HEK293 (cell line): ENCODE measurements at regions of chr22 and their contacts with region 1.

Region 1: GRCh38 chr22:38705235-38706100 is at the start of gene GTPBP1:
- H3K4me3 ChIP-seq: peak within 1 kb of the TSS; percentile 92
- H3K27ac ChIP-seq: peak within 1 kb of the TSS; percentile 94
- H3K4me1 ChIP-seq: peaks cover 13% of the 10 kb centered on the region
- CTCF ChIP-seq: peak; percentile 78

Region 2: DNA sequence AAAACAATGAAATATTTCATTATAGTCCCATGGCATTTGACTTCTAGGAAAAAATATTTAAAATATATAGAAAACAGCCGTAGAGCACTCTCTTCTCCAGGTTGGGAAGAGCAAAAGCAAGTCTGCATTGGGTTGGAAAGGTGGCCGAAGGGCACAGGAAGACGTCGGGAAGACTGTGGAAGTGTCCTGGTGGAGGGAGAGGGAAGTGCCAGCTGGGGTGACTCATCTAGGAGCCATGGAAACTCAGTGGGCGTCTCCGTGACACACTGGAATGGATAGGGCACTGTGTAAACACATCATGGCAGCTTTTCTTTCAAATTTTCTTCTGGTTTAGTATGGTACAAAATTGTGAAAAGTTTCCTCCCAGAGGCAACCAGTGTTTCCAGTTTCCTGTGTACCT is 12.9 kb after region 1 on chr22:
- CTCF ChIA-PET with region 1: interaction called, 19 read pairs
- POLR2A ChIA-PET with region 1: interaction called, 17 read pairs
- H3K4me3 ChIP-seq: no peak overlapping the region
- H3K27ac ChIP-seq: peak overlapping the region; percentile 34; the same call in 1 of the 2 replicates
- H3K4me1 ChIP-seq: peaks cover 12% of the 10 kb centered on the region
- CTCF ChIP-seq: peak; percentile 58

Region 3: DNA sequence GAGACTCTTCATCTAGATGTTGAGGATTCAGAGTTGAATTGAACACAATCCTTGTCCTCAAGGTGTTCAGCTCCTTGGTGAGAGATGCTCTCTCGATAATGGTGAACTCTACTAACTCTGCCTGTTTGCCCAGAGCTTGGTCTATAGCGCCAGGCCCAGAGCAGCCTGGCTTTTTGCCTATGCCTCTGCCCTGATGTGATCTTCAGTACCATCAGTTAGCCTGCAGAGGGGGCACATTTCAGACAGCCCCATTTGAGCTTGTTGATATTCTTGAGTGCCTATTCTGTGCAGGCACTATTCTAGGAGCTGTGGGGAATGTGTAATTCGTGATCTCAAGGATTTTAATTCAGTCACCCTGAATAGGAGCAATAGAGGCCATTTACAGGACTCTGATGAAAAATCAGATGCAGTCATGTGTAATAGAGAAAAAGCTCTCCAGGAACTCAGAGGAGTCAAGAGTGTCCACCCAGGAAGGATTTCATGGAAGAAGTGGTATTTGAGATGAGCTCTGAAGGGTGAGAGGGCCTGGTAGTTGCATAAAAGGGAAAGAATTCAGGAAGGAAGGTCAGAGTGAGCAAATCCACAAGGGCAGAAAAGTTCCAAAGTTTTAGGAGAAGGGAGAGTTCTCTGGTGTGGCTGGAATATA is 19.6 kb after region 1 on chr22:
- CTCF ChIA-PET with region 1: interaction called, 12 read pairs
- POLR2A ChIA-PET with region 1: interaction called, 7 read pairs
- H3K4me3 ChIP-seq: no peak overlapping the region
- H3K27ac ChIP-seq: peak overlapping the region; percentile 36; the same call in 1 of the 2 replicates
- H3K4me1 ChIP-seq: no peaks in the 10 kb centered on the region
- CTCF ChIP-seq: peak; percentile 32; the same call in 1 of the 2 replicates